Posterior vena cava (tissue), 2 donors: ENCODE measurements at regions of chr10 and their contacts with region 1.

Region 1: DNA sequence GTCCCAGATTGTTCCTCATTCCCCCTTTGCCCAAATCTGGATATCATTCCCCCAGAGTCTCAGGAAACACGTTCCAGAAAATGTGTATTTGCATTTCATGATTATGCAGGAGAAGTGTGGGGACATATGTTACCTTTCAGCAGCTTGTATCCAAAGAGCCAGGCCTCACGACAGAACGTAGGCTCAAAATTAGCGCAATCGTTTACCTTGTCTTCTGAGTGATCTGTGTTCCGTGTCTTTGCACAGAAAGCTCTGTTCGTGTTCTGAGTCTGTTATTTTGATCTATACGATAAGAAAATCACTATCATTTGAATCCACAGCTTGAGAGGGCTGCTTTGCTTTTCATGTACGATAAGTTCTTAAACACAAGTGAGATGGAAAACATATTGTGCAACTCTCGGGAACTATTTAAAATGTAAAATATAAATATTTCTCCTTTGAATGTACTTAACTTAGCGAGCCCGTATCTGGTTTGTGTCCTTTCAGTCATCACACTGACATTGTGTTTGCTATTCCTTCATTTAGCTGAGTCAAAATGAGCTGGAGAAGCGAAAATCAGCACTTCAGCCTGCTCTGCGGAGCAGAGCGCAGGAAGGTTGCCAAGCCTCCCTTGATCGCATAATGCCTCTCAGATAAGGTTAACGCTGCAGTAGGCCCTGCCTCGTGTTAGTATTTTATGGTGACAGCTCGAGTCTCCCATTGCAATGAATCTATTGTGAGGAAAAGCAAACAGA is 80.2 kb upstream of the CACNB2 start:
- DNase-seq: no peak

Region 2: GRCh38 chr10:17368708-17369272 is 691.2 kb before region 1 on chr10:
- intact Hi-C with region 1: no loop called
- DNase-seq: no peak

Region 3: DNA sequence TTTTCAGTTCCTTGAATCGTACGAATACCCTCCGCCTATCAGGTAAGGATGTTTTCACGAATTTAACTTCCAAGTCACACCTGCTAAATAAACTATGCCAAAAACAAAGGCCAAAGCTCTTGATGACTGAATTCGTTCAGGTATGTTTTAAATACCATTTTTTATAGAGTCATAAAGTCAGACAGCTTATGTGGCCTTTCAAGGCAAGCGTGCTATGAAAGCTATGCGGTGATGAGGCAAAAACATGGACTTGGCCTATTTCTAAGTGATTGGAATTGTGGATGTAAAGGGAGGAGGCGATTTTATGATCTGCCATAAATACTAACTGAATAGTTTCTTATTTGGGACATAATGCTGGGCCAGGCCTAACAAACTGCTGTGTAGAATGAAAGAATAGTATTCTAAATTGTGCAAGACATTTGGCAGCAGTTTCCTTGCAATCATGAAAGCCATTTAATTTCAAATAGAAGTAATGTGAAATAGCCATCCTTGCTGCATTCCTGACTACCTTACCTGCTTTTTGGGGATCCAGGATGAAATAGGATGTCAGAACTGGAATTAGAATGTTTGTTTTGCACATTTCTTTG is 94.3 kb before region 1 on chr10:
- intact Hi-C with region 1: no loop called
- DNase-seq: no peak

Region 4: GRCh38 chr10:18005781-18006456 is 54.1 kb before region 1 on chr10:
- intact Hi-C with region 1: no loop called
- DNase-seq: no peak

Region 5: DNA sequence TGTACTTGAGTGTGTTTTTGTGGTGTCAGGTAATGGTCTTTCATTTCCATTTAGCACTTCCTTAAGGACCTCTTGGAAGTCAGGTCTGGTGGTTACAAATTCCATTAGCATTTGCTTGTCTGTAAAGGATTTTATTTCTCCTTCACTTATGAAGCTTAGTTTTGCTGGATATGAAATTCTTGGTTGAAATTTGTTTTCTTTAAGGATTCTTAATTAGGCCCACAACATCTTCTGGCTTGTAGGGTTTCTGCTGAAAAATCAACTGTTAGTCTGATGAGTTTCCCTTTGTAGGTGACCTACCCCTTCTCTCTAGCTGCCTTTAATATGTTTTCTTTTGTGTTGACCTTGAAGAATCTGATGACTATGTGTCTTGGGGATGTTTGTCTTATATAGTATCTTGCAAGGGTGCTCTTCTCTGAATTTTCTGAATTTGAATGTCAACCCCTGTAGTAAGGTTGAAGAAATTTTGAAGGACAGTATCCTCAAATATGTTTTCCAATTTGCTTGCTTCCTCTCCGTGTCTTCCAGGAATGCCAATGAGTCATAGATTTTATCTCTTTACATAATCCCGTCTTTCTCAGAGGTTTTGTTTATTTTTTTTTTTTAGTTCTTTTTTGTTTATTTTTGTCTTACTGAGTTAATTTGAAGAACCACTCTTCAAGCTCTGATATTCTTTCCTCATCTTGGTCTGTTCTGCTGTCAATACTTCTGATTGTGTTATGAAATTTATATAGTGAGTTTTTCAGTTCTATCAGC is 38.1 kb before region 1 on chr10:
- intact Hi-C with region 1: no loop called
- DNase-seq: no peak

Region 6: GRCh38 chr10:18079665-18080295 is 19.8 kb after region 1 on chr10:
- intact Hi-C with region 1: loop called in 1 of 2 experiments (anchors 1 kb)
- DNase-seq: no peak